ENCODE measurements at regions of chr13 and their contacts with region 1.

Region 1: GRCh38 chr13:46961719-46962118 is 64.9 kb upstream of the HTR2A start:
- DNase-seq: peak; percentile 65
- H3K4me3 ChIP-seq: no peak overlapping the region
- CTCF ChIP-seq: no peak

Region 2: DNA sequence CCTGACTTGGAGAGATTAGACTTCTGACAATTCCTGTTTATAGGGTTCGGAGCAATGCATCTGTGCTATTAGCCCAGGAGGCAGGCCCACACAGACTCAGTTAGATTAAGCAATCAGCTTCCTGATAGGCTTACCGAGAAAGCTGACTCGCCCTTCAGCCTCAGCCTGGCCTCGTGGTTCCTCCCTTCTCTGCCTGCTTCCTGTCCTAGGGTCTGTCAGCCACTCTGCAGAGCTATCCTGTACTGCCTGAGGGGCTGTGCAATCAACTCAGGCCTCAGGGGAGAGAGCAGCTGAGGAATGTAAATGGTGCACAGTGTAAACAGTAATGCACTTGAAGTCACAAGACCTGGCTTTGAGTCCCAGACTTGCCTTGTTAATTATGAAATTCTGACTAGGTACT is 95.6 kb before region 1 on chr13:
- in situ Hi-C with region 1: no loop called
- DNase-seq: no peak
- H3K4me3 ChIP-seq: no peak overlapping the region
- CTCF ChIP-seq: no peak

Region 3: GRCh38 chr13:46885018-46885417 is 76.7 kb before region 1 on chr13:
- in situ Hi-C with region 1: no loop called
- DNase-seq: no peak
- H3K4me3 ChIP-seq: no peak overlapping the region
- CTCF ChIP-seq: no peak

Region 4: GRCh38 chr13:46926916-46927590 is 34.7 kb before region 1 on chr13:
- in situ Hi-C with region 1: loop called (anchors 5 kb)
- DNase-seq: no peak
- H3K4me3 ChIP-seq: no peak overlapping the region
- CTCF ChIP-seq: no peak

Region 5: GRCh38 chr13:47215741-47216140 is 254.0 kb after region 1 on chr13:
- in situ Hi-C with region 1: no loop called
- DNase-seq: peak; percentile 86
- H3K4me3 ChIP-seq: no peak overlapping the region
- CTCF ChIP-seq: no peak

Measured in astrocyte of the cerebellum (primary cell).